Ascending aorta (tissue), 2 donors: ENCODE measurements at regions of chr20 and their contacts with region 1.

Region 1: DNA sequence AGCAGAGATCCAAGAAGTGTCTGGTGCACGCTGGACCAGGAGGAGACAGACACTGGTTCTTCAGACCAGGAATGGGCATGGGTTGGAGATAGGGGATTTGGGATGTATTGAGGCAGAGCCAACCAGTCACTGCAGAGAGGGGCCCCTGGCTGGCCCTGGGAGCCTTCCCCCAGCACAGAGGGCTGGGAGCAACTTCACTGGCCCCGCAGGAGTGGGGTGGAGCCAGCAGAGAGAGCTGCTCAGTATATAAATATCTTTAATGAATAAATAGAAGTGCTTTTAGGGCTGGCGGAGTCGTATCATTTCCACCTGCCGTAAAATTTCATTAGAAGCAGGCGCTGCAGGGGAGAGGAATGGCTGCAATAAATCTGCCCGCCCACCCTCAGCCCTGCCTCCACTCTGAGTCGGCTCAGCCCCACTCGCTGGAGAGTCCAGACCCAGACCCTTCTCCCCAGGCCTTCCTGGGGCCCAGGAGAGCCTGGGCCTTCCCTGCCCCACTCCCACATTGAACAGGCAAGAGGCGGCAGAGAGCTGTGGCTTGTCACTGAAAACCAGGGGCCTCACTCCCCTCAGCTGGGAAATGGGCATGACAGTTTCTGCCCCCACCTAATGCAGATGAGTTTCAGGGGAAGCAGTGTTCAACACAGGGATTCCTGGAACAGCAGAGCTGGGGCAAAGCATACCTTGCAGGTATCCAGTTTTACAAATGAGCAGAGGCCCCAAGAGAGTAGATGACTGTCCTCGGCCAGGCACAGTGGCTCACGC is 23.9 kb upstream of the VSTM2L start:
- DNase-seq: no peak
- H3K4me3 ChIP-seq: no peak overlapping the region
- H3K27ac ChIP-seq: no peak overlapping the region
- H3K4me1 ChIP-seq: no peaks in the 10 kb centered on the region
- H3K27me3 ChIP-seq: no peaks in the 10 kb centered on the region
- CTCF ChIP-seq: no peak

Region 2: GRCh38 chr20:37816003-37816402 is 63.0 kb before region 1 on chr20:
- intact Hi-C with region 1: loop called (anchors 10 kb)
- DNase-seq: no peak
- H3K4me3 ChIP-seq: no peak overlapping the region
- H3K27ac ChIP-seq: no peak overlapping the region
- H3K4me1 ChIP-seq: no peaks in the 10 kb centered on the region
- H3K27me3 ChIP-seq: no peaks in the 10 kb centered on the region
- CTCF ChIP-seq: no peak

Region 3: DNA sequence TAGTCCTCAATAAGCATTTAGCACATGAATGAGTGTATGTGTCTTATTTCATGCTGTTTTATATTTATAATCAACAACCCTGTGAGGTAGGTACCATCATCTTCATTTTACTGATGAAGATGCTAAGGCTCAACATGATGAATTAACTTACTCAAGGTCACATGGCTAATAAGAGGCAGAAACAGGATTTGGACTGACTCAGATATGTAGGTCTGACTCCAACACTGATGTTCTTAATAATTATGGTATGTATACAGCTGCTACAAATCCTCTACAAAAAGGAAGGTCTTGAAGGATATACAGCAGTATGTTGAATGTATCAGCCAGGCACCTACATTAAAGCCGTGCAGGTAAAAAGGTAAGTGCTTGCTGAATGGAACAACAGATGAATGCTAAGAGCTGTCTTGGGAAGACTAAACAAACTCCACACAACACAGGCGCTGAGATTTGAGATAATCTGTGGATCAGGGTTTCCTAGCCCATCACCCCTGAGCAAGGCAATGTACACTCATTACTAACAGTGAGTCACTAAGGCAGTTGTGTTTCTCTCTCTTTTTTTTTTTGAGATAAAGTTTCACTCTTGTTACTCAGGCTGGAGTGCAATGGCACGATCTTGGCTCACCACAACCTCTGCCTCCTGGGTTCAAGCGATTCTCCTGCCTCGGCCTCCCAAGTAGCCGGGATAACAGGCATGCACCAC is 122.3 kb after region 1 on chr20:
- intact Hi-C with region 1: no loop called
- DNase-seq: no peak
- H3K4me3 ChIP-seq: no peak overlapping the region
- H3K27ac ChIP-seq: no peak overlapping the region
- H3K4me1 ChIP-seq: no peaks in the 10 kb centered on the region
- H3K27me3 ChIP-seq: no peaks in the 10 kb centered on the region
- CTCF ChIP-seq: no peak